A673 (cell line): ENCODE measurements at regions of chr10 and their contacts with region 1.

Region 1: GRCh38 chr10:31830887-31831286 is 97.7 kb downstream of the ARHGAP12 start:
- DNase-seq: peak; percentile 36
- H3K4me3 ChIP-seq: no peak overlapping the region
- H3K27ac ChIP-seq: no peak overlapping the region
- H3K4me1 ChIP-seq: peaks cover 41% of the 10 kb centered on the region
- H3K27me3 ChIP-seq: no peaks in the 10 kb centered on the region
- CTCF ChIP-seq: no peak

Region 2: GRCh38 chr10:31687663-31688482 is 143.0 kb before region 1 on chr10:
- CTCF ChIA-PET with region 1: no interaction called
- POLR2A ChIA-PET with region 1: no interaction called
- intact Hi-C with region 1: no loop called
- DNase-seq: no peak
- H3K4me3 ChIP-seq: no peak overlapping the region
- H3K27ac ChIP-seq: no peak overlapping the region
- H3K4me1 ChIP-seq: no peaks in the 10 kb centered on the region
- H3K27me3 ChIP-seq: no peaks in the 10 kb centered on the region
- CTCF ChIP-seq: no peak

Region 3: GRCh38 chr10:31947144-31947926 is 116.4 kb after region 1 on chr10:
- CTCF ChIA-PET with region 1: no interaction called
- POLR2A ChIA-PET with region 1: interaction called, 12 read pairs
- intact Hi-C with region 1: loop called (anchors 10 kb)
- DNase-seq: peak; percentile 87
- H3K4me3 ChIP-seq: no peak overlapping the region
- H3K27ac ChIP-seq: peak overlapping the region; percentile 14
- H3K4me1 ChIP-seq: peaks cover 38% of the 10 kb centered on the region
- H3K27me3 ChIP-seq: no peaks in the 10 kb centered on the region
- CTCF ChIP-seq: peak; percentile 73